Aorta (tissue), 5 donors: ENCODE measurements at regions of chr6 and their contacts with region 1.

Region 1: GRCh38 chr6:52551401-52552277 is 25.2 kb downstream of the TRAM2 start:
- DNase-seq: peak; percentile 83 to 90
- ATAC-seq: peak; percentile 82
- H3K4me3 ChIP-seq: no peak overlapping the region
- H3K27ac ChIP-seq: peak overlapping the region in 1 of 2 donors; percentile 85
- H3K4me1 ChIP-seq: peaks cover 5 to 11% of the 10 kb centered on the region in 2 donors
- H3K27me3 ChIP-seq: no peaks in the 10 kb centered on the region

Region 2: GRCh38 chr6:52512199-52512598 is 39.4 kb before region 1 on chr6:
- intact Hi-C with region 1: loop called in 1 of 2 experiments (anchors 5 kb)
- DNase-seq: peak; percentile 70 to 82
- ATAC-seq: peak; percentile 92
- H3K4me3 ChIP-seq: no peak overlapping the region
- H3K27ac ChIP-seq: peak overlapping the region; percentile 65 to 93
- H3K4me1 ChIP-seq: peaks cover 7 to 12% of the 10 kb centered on the region in 2 donors
- H3K27me3 ChIP-seq: no peaks in the 10 kb centered on the region

Region 3: GRCh38 chr6:52517502-52518278 is 33.9 kb before region 1 on chr6:
- intact Hi-C with region 1: loop called (anchors 2 to 5 kb)
- DNase-seq: peak; percentile 91 to 94
- ATAC-seq: peak; percentile 92
- H3K4me3 ChIP-seq: no peak overlapping the region
- H3K27ac ChIP-seq: peak overlapping the region; percentile 62 to 90
- H3K4me1 ChIP-seq: peaks cover 3 to 8% of the 10 kb centered on the region in 2 donors
- H3K27me3 ChIP-seq: no peaks in the 10 kb centered on the region